Activated CD8-positive, alpha-beta T cell treated with anti-CD3 and anti-CD28 coated beads for 36 hours (primary cell): ENCODE measurements at regions of chr7 and their contacts with region 1.

Region 1: GRCh38 chr7:33895025-33895804 is 10.1 kb upstream of the BMPER start:
- DNase-seq: peak; percentile 88
- ATAC-seq: peak; percentile 99
- H3K4me3 Mint-ChIP-seq: no peak overlapping the region
- H3K27ac Mint-ChIP-seq: no peak overlapping the region
- H3K4me1 Mint-ChIP-seq: peaks cover 8% of the 10 kb centered on the region
- H3K27me3 Mint-ChIP-seq: peaks cover 39% of the 10 kb centered on the region
- CTCF ChIP-seq: peak; percentile 87

Region 2: DNA sequence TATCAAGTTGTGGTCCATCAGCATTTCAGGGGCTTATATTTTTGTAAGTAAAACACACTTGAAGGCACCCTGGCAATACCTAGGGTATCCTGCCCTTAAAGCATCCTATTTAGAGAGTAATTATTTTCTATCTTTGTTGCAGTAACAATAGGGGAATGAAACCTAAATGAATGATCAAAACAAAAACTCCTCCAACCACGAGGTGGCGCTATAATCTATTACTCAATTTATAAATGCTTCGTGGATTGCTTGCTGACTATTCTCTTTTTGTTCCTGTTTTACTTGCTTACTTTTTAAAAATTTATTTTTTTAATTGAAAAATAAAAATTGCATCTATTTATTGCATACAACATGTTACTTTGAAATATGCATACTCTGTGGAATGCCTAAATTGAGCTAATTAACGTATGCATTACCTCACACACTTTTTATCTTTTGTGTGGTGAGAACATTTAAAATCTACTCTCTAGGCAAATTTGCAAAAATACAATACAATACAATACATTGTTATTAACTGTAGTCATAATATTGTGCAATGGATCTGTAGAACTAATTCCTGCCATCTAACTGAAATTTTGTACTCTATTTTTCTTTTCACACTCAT is 137.6 kb before region 1 on chr7:
- CTCF ChIA-PET with region 1: interaction called, 7 read pairs
- POLR2A ChIA-PET with region 1: no interaction called
- intact Hi-C with region 1: loop called (anchors 10 kb)
- DNase-seq: peak; percentile 57
- ATAC-seq: no peak
- H3K4me3 Mint-ChIP-seq: no peak overlapping the region
- H3K27ac Mint-ChIP-seq: no peak overlapping the region
- H3K4me1 Mint-ChIP-seq: no peaks in the 10 kb centered on the region
- H3K27me3 Mint-ChIP-seq: no peaks in the 10 kb centered on the region
- CTCF ChIP-seq: peak; percentile 75

Region 3: GRCh38 chr7:33868159-33868558 is 27.1 kb before region 1 on chr7:
- CTCF ChIA-PET with region 1: no interaction called
- POLR2A ChIA-PET with region 1: no interaction called
- intact Hi-C with region 1: no loop called
- DNase-seq: no peak
- ATAC-seq: no peak
- H3K4me3 Mint-ChIP-seq: no peak overlapping the region
- H3K27ac Mint-ChIP-seq: no peak overlapping the region
- H3K4me1 Mint-ChIP-seq: no peaks in the 10 kb centered on the region
- H3K27me3 Mint-ChIP-seq: peaks cover 4% of the 10 kb centered on the region
- CTCF ChIP-seq: no peak

Region 4: DNA sequence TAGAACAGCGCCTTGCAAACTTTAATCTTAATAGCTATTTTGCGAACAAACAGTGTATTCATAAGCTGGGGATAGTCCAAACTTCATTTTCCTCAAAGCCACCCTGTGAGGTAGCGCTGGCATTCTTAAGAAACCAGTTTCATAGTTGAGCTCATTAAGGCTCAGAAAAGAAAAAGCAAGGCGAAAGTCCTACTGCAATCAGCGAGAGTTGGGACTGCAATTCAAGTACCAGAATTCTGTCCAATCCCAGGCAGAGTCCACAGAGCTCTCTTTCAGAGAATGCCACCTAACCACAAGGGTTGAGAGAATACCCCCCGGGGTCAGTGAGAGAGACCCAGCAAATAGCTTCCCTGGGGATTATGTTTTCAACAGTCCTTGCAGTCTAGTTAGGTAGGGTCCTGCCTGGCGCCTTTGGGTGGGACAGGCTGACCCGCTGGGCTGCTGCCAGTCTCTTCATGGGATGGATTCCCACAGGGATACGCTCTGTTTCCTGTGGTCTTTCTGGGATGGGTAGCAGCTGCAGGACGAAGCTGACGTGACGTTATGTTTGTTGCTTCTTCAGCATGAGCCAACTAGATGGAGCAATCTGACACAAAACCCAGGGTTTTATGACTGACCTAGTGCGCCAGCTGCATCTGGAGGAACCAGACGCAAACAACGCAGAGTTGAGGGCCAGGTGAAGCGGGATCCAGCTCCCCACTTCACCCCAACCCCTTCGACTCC is 26.2 kb after region 1 on chr7:
- CTCF ChIA-PET with region 1: interaction called, 11 read pairs
- POLR2A ChIA-PET with region 1: no interaction called
- intact Hi-C with region 1: no loop called
- DNase-seq: no peak
- ATAC-seq: no peak
- H3K4me3 Mint-ChIP-seq: no peak overlapping the region
- H3K27ac Mint-ChIP-seq: no peak overlapping the region
- H3K4me1 Mint-ChIP-seq: no peaks in the 10 kb centered on the region
- H3K27me3 Mint-ChIP-seq: peaks cover 5% of the 10 kb centered on the region
- CTCF ChIP-seq: no peak